ENCODE measurements at regions of chr6 and their contacts with region 1.

Region 1: DNA sequence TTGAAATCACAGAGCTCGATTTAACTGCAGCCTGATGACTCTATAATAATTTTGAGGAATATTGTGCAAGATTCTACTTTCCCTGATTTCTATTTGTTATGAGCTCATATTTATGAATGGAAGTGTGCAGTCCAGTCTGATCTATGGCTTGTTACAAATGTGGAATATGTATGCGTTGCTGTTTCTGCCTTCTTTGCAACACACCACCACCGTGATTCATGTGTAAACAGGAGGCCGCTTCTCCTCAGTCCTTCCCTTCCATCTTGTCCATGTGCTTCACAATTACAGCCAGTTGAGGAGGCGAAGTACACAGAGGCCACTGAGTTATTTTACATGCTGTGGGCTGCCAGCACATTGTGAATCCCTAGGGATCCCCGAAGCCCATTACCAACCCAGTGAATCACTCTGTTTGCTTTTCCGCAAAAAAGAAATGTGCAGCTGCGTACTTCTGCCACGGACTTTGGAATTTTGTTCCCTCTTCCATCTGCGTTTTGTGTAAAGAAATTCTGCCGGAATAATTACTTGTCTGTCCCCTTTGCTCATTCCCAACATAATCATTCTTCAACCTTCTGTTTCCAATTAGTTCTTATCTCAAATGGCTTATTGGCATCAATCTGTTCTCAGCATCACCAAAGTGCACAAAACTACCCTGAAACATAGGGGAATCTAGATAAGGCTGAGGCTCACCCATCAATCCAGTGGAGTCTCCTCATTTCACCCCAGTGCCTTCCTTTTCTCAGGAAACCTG is 551.6 kb upstream of the CITED2 start:
- DNase-seq: no peak
- H3K4me3 ChIP-seq: no peak overlapping the region
- H3K27me3 ChIP-seq: no peaks in the 10 kb centered on the region
- CTCF ChIP-seq: no peak

Region 2: GRCh38 chr6:139508023-139508422 is 418.0 kb before region 1 on chr6:
- CTCF ChIA-PET with region 1: no interaction called
- POLR2A ChIA-PET with region 1: no interaction called
- DNase-seq: no peak
- H3K4me3 ChIP-seq: no peak overlapping the region
- H3K27me3 ChIP-seq: no peaks in the 10 kb centered on the region
- CTCF ChIP-seq: no peak

Region 3: GRCh38 chr6:139790527-139790926 is 135.5 kb before region 1 on chr6:
- CTCF ChIA-PET with region 1: no interaction called
- POLR2A ChIA-PET with region 1: no interaction called
- DNase-seq: no peak
- H3K4me3 ChIP-seq: no peak overlapping the region
- H3K27me3 ChIP-seq: no peaks in the 10 kb centered on the region
- CTCF ChIP-seq: no peak

Region 4: GRCh38 chr6:139912735-139913400 is 13.2 kb before region 1 on chr6:
- CTCF ChIA-PET with region 1: no interaction called
- POLR2A ChIA-PET with region 1: no interaction called
- DNase-seq: no peak
- H3K4me3 ChIP-seq: no peak overlapping the region
- H3K27me3 ChIP-seq: no peaks in the 10 kb centered on the region
- CTCF ChIP-seq: no peak

Region 5: DNA sequence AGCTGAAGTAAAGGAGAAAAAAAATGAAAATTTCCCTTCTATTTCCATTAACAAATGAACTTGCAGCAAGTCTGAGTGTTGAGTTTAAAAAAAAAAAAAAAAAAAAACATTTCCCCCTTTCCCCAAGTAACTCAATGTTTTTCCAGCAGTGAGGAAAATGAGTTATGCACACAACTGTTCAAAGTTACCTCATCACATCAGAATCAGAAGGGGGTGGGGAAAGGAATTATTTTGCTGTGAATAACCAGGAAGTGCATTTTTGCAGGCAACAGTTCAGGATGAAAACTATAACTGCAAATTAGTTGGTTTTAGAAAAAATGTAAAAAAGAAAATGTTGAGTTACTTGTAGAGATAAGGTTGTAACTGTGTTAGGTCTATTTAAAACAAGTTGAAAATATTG is 17.3 kb after region 1 on chr6:
- CTCF ChIA-PET with region 1: interaction called, 6 read pairs
- POLR2A ChIA-PET with region 1: interaction called, 18 read pairs
- DNase-seq: peak; percentile 91
- H3K4me3 ChIP-seq: no peak overlapping the region
- H3K27me3 ChIP-seq: no peaks in the 10 kb centered on the region
- CTCF ChIP-seq: no peak

Region 6: GRCh38 chr6:140052756-140053729 is 127.0 kb after region 1 on chr6:
- CTCF ChIA-PET with region 1: no interaction called
- POLR2A ChIA-PET with region 1: no interaction called
- DNase-seq: no peak
- H3K4me3 ChIP-seq: no peak overlapping the region
- H3K27me3 ChIP-seq: no peaks in the 10 kb centered on the region
- CTCF ChIP-seq: peak; percentile 56

Measured in BJ (cell line).